Activated B cell treated with CpG ODN at 0.5 μM for 24 hours (primary cell): ENCODE measurements at regions of chr12 and their contacts with region 1.

Region 1: DNA sequence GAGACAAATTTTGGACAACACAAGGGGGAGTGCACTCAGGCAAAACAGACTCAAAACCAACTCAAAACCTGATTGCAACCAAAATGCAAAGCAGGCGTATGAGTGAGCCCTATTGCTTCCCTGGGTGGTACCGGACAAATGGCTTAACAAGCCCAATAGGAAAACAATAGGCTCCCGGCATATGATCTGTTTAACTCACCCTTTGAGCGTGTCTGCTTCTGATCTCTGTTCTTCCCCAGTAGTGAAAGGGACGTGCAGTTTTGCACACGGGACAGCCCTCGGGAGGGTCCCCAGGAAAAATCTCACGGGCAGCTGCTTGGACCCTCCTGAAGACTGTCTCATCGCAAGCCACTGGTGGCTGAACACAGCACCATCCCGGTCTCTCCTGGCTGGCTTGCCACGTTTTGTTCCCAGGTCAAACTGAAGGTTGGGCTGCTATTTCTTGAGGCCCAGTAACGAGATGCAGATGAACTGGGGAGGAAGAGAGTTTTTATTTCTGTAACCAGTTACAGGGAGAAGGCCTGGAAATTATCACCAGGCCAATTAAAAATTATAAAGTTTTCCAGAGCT is 9.9 kb downstream of the SOAT2 start:
- DNase-seq: no peak
- ATAC-seq: no peak
- H3K4me3 Mint-ChIP-seq: no peak overlapping the region
- H3K27ac Mint-ChIP-seq: no peak overlapping the region
- H3K4me1 Mint-ChIP-seq: no peaks in the 10 kb centered on the region
- H3K27me3 Mint-ChIP-seq: no peaks in the 10 kb centered on the region
- CTCF ChIP-seq: no peak

Region 2: DNA sequence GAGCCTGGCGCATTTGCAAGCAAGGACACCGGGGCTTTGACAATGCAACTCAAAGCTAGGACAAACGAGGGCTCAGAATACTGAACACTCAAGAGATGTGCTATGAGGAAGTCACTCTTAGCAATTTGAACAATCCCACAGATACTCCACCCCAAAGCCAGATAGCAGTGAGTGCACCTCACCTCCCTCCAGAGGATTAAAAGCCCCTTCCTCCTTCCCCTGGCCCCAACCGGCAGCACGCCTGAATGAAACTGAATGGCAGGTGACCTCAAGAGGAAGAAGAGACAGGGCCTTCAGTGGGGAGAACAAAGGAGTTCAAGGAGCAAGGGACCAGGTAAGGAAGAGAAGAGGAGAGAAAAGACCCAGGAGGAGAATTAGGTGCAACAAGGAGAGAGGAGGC is 262.5 kb before region 1 on chr12:
- CTCF ChIA-PET with region 1: no interaction called
- POLR2A ChIA-PET with region 1: no interaction called
- intact Hi-C with region 1: no loop called
- DNase-seq: no peak
- ATAC-seq: no peak
- H3K4me3 Mint-ChIP-seq: no peak overlapping the region
- H3K27ac Mint-ChIP-seq: no peak overlapping the region
- H3K4me1 Mint-ChIP-seq: peaks cover 6% of the 10 kb centered on the region
- H3K27me3 Mint-ChIP-seq: peaks cover 26% of the 10 kb centered on the region
- CTCF ChIP-seq: no peak

Region 3: DNA sequence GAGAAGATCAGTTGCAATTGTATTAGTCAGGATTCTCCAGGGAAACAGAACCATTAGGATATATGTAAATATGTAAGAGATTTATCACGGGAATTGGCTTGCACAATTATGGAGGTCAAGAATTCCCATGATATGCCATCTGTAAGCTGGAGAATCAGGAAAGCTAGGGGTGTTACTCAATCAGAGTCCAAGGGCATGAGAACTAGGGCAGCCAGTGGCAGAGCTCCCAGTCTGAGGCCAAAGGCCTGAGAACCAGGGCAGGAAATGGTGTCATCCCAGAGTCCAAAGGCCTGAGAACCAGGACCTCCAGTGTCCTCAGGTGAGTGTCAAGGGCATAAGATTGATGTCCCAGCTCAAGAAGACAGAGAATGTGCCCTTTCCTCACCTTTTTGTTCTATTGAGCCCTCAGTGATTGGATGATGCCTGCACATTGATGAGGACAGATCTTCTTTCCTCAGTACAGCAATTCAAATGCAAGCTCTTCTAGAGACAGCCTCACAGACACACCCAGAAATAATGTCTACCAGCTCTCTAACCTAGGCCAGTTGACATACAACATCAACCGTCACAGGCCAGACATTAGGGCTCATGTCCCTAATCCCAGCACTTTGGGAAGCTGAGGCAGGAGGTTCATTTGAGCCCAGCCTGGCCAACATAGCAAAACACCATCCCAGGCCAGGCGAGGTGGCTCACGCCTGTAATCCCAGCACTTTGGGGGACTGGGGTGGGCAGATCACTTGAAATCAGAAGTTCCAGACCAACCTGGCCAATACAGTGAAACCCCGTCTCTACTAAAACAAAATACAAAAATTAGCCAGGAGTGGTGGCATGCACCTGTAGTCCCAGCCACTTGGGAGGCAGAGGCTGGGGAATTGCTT is 32.4 kb after region 1 on chr12:
- CTCF ChIA-PET with region 1: no interaction called
- POLR2A ChIA-PET with region 1: no interaction called
- intact Hi-C with region 1: loop called (anchors 5 kb)
- DNase-seq: no peak
- ATAC-seq: no peak
- H3K4me3 Mint-ChIP-seq: no peak overlapping the region
- H3K27ac Mint-ChIP-seq: no peak overlapping the region
- H3K4me1 Mint-ChIP-seq: no peaks in the 10 kb centered on the region
- H3K27me3 Mint-ChIP-seq: peaks cover 7% of the 10 kb centered on the region
- CTCF ChIP-seq: no peak